Thyroid gland (tissue), 4 donors: ENCODE measurements at regions of chr2 and their contacts with region 1.

Region 1: GRCh38 chr2:170815746-170816503 is 762 bp upstream of the GAD1 start:
- DNase-seq: peak; percentile 67 to 69
- H3K4me3 ChIP-seq: peak overlapping the region in 1 of 3 donors; percentile 32
- H3K27ac ChIP-seq: no peak overlapping the region
- H3K4me1 ChIP-seq: peaks cover 46 to 60% of the 10 kb centered on the region in 2 donors
- H3K27me3 ChIP-seq: peaks cover 46% of the 10 kb centered on the region
- CTCF ChIP-seq: peak; percentile 59 to 86 (median 76)
- POLR2A ChIP-seq: no peak

Region 2: DNA sequence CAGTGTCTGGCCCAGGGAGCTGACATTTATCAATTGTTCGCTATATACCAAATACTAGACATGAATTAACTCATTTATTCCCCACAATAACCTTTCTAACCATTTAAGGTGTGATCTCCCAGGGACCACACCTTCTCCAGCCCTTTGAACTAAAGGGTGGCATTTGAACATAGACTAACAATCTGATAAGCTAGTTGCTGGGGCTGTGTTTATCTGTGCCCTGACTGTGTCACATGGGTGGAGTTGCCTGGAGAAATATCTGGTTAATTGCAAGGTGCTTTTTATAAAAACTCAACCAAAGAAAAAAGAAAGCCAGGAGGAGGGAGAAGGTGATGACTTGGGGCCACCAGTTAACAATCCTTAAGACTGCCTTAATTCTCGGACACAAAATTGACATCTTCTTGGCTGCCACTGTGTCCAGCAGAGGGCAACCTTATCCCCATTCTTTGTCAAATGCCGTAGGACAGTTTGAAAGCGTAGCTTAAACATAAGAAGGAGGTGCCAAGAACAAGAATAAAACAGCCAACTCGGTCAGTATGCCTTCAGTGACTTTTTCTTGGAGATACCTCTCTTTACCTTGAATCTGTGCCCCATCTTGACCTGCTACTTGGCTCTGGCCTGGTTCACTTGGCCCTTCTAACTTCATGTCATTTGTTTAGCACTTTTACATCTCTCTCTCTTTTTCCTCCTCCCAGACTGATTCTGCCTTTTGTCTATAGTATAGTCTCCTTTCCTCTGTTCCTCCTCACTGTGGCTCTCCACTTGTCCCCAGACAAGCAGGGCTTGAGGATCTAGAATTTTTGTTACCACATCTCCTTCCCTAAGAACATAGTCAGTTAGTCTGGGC is 454.6 kb before region 1 on chr2:
- intact Hi-C with region 1: loop called (anchors 5 kb)
- DNase-seq: peak; percentile 43 to 50
- H3K4me3 ChIP-seq: no peak overlapping the region
- H3K27ac ChIP-seq: no peak overlapping the region
- H3K4me1 ChIP-seq: no peaks in the 10 kb centered on the region
- H3K27me3 ChIP-seq: no peaks in the 10 kb centered on the region
- CTCF ChIP-seq: peak; percentile 29 to 74 (median 50)
- POLR2A ChIP-seq: no peak

Region 3: DNA sequence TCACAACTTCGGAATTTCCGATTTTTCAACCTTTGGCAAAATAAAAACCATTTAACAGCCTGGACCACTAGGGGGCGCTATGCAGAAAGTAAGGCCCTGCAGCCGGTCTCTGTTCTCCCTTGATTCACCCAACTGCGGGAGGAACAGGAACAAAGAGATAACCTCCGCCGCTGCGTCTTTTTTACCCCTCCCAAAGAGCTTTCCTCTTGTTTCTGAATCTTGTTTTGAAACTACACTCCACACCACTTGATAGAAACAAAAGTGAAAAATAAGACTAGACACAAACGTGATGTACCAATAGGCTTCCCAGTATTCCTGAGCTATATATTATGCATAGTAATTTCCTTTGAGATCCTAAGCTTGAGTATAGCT is 406.8 kb before region 1 on chr2:
- intact Hi-C with region 1: loop called (anchors 5 kb)
- DNase-seq: peak; percentile 67 to 76
- H3K4me3 ChIP-seq: no peak overlapping the region
- H3K27ac ChIP-seq: no peak overlapping the region
- H3K4me1 ChIP-seq: peaks cover 0 to 6% of the 10 kb centered on the region in 2 donors
- H3K27me3 ChIP-seq: no peaks in the 10 kb centered on the region
- CTCF ChIP-seq: peak; percentile 66 to 97 (median 76)
- POLR2A ChIP-seq: no peak

Region 4: DNA sequence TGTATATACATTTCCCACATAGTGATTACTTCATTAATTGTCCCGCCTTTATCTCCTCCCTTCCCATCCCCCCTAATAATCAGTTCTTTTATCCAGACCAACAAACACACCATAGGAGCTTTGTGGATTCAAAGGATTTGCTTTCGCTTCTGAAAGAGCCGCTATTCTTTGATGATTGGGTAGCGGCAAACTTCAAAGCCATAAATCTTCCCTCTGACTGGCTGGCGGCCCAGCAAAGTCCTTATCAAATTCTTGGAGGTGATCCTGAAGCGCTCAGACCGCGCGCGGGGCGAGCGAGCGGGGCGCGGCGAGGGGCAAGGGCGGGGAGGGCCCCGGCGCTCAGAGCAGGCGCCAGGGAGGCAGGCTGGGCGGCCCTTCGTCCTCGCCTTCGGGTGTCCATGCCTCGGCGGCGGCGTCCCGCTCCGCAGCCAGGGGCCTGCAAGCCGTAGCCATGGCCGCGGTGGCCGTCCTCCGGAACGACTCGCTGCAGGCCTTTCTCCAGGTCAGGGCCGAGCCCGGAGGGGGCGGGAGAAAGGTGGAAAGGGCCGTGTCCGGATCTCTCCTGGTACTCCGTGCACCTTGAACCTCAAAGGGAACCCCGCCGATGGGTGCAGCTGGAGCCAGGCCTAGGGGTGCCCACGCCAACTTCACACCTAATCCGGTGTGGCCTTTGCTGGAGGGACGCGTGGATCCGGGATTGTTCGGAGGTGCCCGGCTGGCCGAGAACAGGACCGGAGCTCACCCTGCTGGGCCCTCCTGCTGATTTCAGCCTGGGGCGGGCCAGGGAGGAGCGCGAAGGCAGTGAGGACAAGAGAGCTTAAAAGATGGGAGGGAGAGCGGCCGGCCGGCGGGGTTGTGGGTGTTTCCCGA is 100.6 kb before region 1 on chr2 and contains the start of gene SP5:
- intact Hi-C with region 1: loop called (anchors 5 kb)
- DNase-seq: peak; percentile 45 to 52
- H3K4me3 ChIP-seq: peak within 1 kb of the TSS; percentile 8 to 38 (median 14)
- H3K27ac ChIP-seq: no peak within 1 kb of the TSS
- H3K4me1 ChIP-seq: peaks cover 17 to 48% of the 10 kb centered on the region in 2 donors
- H3K27me3 ChIP-seq: peaks cover 32% of the 10 kb centered on the region
- CTCF ChIP-seq: no peak
- POLR2A ChIP-seq: no peak
- total RNA-seq, gene SP5: 0.56 TPM in 1 of 4 donors, not detected in the others

Region 5: DNA sequence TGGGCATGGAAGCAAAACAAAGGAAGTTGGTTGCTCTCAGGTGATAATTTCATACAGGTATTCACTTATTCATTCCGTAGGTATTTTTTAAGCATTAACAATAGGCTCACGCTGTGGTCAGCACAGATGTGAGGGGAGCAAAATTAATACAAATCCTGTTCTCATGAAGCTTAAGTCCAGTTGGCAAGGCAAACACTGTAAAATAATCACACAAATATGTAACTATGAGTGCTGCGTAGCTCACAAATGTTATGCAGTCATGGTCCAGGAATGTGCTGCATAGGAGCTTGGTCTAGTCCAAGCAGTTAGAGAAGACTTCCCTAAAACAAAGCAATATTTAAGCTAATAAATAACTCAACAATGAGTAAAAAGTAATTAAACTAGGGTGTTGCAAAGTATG is 76.9 kb before region 1 on chr2:
- intact Hi-C with region 1: no loop called
- DNase-seq: no peak
- H3K4me3 ChIP-seq: no peak overlapping the region
- H3K27ac ChIP-seq: no peak overlapping the region
- H3K4me1 ChIP-seq: no peaks in the 10 kb centered on the region
- H3K27me3 ChIP-seq: no peaks in the 10 kb centered on the region
- CTCF ChIP-seq: no peak
- POLR2A ChIP-seq: no peak